GM12878 (cell line): ENCODE measurements at regions of chr4 and their contacts with region 1.

Region 1: GRCh38 chr4:147866532-147867271 is 134.8 kb downstream of the ARHGAP10 start:
- DNase-seq: peak; percentile 66
- ATAC-seq: peak; percentile 94
- H3K4me3 ChIP-seq: no peak overlapping the region
- H3K27ac ChIP-seq: no peak overlapping the region
- H3K4me1 ChIP-seq: 0 out of 2 replicates have a peak, but pooled peaks cover 2% of the 10 kb centered on the region
- H3K27me3 ChIP-seq: no peaks in the 10 kb centered on the region
- CTCF ChIP-seq: peak; percentile 92 to 100 (median 99); a peak in 5 of 6 replicates
- EP300 ChIP-seq: no peak
- POLR2A ChIP-seq: no peak
- RAD21 ChIP-seq: peak; percentile 100

Region 2: DNA sequence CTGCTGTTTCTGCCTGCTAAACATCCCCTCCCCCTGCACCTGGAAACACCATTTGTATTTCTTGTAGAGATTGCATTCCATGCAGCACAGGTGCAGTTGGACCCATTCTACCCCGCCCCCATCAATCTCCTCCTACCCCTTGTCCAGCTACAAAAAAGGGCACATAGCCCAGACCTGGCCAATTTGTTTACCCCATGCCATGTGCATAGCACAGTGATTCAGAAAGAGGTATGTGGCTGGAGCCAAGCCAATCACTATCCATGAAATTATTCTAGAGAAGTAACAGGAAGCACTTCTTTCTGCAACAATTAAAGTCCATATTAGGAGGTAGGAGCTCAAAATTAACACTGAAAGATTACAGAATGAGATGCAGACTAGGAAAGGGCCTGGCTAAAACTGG is 269.7 kb before region 1 on chr4:
- CTCF ChIA-PET with region 1: interaction called, 105 read pairs
- POLR2A ChIA-PET with region 1: no interaction called
- RAD21 ChIA-PET with region 1: interaction called, 85 read pairs
- SMC1A ChIA-PET with region 1: interaction called, 52 read pairs
- in situ Hi-C with region 1: no loop called
- intact Hi-C with region 1: loop called (anchors 1 kb)
- DNase-seq: no peak
- ATAC-seq: no peak
- H3K4me3 ChIP-seq: no peak overlapping the region
- H3K27ac ChIP-seq: no peak overlapping the region
- H3K4me1 ChIP-seq: no peaks in the 10 kb centered on the region
- H3K27me3 ChIP-seq: no peaks in the 10 kb centered on the region; a peak in 1 of 4 replicates
- CTCF ChIP-seq: no peak
- EP300 ChIP-seq: no peak
- POLR2A ChIP-seq: no peak
- RAD21 ChIP-seq: no peak

Region 3: DNA sequence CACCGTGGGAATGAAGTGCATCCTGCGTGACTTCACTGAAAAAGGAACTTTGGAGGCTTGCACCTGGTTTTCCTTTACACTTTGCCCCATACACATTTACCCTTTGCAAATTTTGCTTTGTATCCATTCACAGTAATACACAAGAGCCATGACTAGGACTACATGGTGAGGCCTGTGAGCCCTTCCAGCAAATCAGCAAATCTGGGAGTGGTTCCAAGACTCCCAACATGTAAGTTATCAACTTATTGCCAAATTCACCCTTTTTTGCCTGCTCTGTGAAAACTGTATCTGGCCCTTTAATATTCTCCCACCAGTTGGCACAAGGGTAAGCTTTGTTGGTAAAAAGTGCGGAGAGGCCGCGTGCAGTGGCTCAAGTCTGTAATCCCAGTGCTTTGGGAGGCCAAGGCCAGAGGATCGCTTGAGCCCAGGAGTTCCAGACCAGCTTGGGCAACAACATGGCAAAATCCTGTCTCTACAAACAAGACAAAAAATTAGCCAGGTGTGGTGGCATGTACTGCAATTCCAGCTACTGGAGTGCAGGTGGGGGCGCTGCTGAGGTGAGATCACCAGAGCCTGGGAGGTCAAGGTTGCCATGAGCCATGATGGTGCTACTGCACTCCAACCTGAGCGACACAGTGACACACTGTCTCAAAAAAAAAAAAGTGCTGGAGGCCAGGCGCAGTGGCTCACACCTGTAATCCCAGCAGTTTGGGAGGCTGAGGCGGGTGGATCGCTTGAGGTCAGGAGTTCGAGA is 187.7 kb before region 1 on chr4:
- CTCF ChIA-PET with region 1: interaction called, 44 read pairs
- POLR2A ChIA-PET with region 1: no interaction called
- RAD21 ChIA-PET with region 1: interaction called, 26 read pairs
- SMC1A ChIA-PET with region 1: interaction called, 28 read pairs
- in situ Hi-C with region 1: no loop called
- intact Hi-C with region 1: no loop called
- DNase-seq: no peak
- ATAC-seq: no peak
- H3K4me3 ChIP-seq: no peak overlapping the region
- H3K27ac ChIP-seq: no peak overlapping the region
- H3K4me1 ChIP-seq: no peaks in the 10 kb centered on the region
- H3K27me3 ChIP-seq: no peaks in the 10 kb centered on the region
- CTCF ChIP-seq: peak; percentile 2 to 35 (median 27); a peak in 4 of 6 replicates
- EP300 ChIP-seq: no peak
- POLR2A ChIP-seq: no peak
- RAD21 ChIP-seq: no peak

Region 4: GRCh38 chr4:147723326-147723725 is 143.4 kb before region 1 on chr4:
- CTCF ChIA-PET with region 1: interaction called, 94 read pairs
- POLR2A ChIA-PET with region 1: interaction called, 3 read pairs
- RAD21 ChIA-PET with region 1: interaction called, 11 read pairs
- SMC1A ChIA-PET with region 1: interaction called, 22 read pairs
- in situ Hi-C with region 1: no loop called
- intact Hi-C with region 1: no loop called
- DNase-seq: no peak
- ATAC-seq: no peak
- H3K4me3 ChIP-seq: no peak overlapping the region
- H3K27ac ChIP-seq: no peak overlapping the region
- H3K4me1 ChIP-seq: peaks cover 7% of the 10 kb centered on the region; the same call in 1 of the 2 replicates
- H3K27me3 ChIP-seq: no peaks in the 10 kb centered on the region
- CTCF ChIP-seq: no peak
- EP300 ChIP-seq: no peak
- POLR2A ChIP-seq: no peak
- RAD21 ChIP-seq: no peak

Region 5: GRCh38 chr4:147773261-147774184 is 93.2 kb before region 1 on chr4:
- CTCF ChIA-PET with region 1: interaction called, 24 read pairs
- POLR2A ChIA-PET with region 1: no interaction called
- RAD21 ChIA-PET with region 1: interaction called, 6 read pairs
- SMC1A ChIA-PET with region 1: interaction called, 10 read pairs
- in situ Hi-C with region 1: no loop called
- intact Hi-C with region 1: loop called (anchors 2 kb)
- DNase-seq: no peak
- ATAC-seq: peak; percentile 57
- H3K4me3 ChIP-seq: no peak overlapping the region
- H3K27ac ChIP-seq: peak overlapping the region; percentile 50; the same call in 1 of the 2 replicates
- H3K4me1 ChIP-seq: peaks cover 29% of the 10 kb centered on the region
- H3K27me3 ChIP-seq: no peaks in the 10 kb centered on the region
- CTCF ChIP-seq: no peak
- EP300 ChIP-seq: no peak
- POLR2A ChIP-seq: no peak
- RAD21 ChIP-seq: no peak

Region 6: DNA sequence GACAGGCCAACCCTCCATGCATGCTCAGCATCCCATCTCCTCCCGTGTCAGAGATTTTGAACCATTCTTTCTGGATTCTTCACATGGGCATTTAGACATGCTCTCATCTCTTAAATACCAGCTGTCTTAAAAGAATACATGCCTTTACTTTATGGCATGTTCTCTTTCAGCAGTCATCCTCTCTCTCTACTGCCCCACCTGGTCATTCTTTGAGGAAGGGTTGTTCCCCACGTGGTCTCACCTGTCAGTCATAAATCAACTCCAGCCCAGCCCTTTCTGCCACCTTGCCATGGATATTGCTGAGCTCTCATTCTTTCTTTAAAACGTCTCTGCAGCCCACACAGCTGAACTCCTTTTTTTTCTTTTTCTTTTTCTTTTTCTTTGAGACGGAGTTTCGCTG is 23.5 kb before region 1 on chr4:
- CTCF ChIA-PET with region 1: interaction called, 197 read pairs
- POLR2A ChIA-PET with region 1: interaction called, 4 read pairs
- RAD21 ChIA-PET with region 1: interaction called, 100 read pairs
- SMC1A ChIA-PET with region 1: interaction called, 87 read pairs
- in situ Hi-C with region 1: no loop called
- intact Hi-C with region 1: no loop called
- DNase-seq: no peak
- ATAC-seq: peak; percentile 71
- H3K4me3 ChIP-seq: no peak overlapping the region
- H3K27ac ChIP-seq: no peak overlapping the region
- H3K4me1 ChIP-seq: peaks cover 28% of the 10 kb centered on the region
- H3K27me3 ChIP-seq: no peaks in the 10 kb centered on the region
- CTCF ChIP-seq: peak; percentile 35 to 50 (median 37); a peak in 5 of 6 replicates
- EP300 ChIP-seq: no peak
- POLR2A ChIP-seq: no peak
- RAD21 ChIP-seq: peak; percentile 30; the same call in 1 of the 2 replicates

Region 7: GRCh38 chr4:148067301-148067916 is 200.7 kb after region 1 on chr4:
- CTCF ChIA-PET with region 1: no interaction called
- POLR2A ChIA-PET with region 1: no interaction called
- RAD21 ChIA-PET with region 1: no interaction called
- SMC1A ChIA-PET with region 1: no interaction called
- in situ Hi-C with region 1: no loop called
- intact Hi-C with region 1: no loop called
- DNase-seq: no peak
- ATAC-seq: no peak
- H3K4me3 ChIP-seq: no peak overlapping the region
- H3K27ac ChIP-seq: no peak overlapping the region
- H3K4me1 ChIP-seq: no peaks in the 10 kb centered on the region
- H3K27me3 ChIP-seq: no peaks in the 10 kb centered on the region
- CTCF ChIP-seq: no peak
- EP300 ChIP-seq: no peak
- POLR2A ChIP-seq: no peak
- RAD21 ChIP-seq: no peak